ENCODE measurements at regions of chr15 and their contacts with region 1.

Region 1: DNA sequence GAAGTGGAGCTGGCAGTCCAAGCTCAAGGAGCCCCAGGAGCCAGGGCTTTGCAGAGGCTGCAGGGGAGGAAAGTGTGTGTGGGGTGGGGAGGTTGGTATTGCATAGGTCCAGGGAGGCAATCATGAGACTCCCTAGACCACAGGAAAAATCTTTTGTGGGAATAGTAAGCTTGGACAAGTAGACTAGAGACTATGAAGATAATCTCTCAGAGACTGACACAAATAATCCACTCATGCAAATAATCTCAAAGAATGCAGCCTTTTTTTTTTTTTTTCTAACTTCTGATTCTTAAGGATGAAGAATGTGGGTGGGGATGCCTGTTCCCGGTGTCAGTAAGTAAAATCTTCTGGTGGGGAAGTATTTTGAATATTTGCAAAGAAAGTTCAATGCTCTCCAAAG is 113.7 kb downstream of the GREM1 start:
- DNase-seq: no peak

Region 2: DNA sequence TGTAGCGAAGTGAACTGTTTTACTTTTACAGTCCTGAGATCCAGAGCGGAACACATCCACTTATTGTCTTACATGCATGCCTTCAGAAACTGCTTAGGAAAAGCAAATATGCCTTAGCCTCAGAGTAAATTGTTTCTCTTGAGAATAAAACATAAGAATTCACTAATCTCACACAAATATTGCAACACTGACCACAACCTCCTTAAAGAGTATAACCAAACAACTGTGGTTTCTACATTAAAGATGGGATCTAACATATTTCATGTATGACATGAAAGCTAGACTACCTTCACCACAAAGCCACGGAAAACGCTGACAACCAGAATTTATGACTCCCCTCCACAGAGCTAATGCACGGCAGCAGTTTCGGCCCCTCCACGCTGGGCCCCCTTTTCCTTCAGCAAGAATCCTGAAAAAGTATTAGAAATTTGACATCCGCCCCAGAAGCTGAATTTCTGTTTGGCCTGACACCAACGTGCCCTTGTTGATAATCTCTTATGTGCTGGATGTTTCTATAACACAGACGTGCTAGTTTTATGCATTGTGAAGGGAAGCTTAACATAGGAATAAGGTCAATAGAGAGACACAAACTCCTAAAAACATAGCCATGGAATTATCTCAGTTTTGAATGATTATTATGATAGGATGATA is 29.1 kb before region 1 on chr15:
- intact Hi-C with region 1: loop called in 1 of 2 experiments (anchors 1 kb)
- DNase-seq: no peak

Region 3: DNA sequence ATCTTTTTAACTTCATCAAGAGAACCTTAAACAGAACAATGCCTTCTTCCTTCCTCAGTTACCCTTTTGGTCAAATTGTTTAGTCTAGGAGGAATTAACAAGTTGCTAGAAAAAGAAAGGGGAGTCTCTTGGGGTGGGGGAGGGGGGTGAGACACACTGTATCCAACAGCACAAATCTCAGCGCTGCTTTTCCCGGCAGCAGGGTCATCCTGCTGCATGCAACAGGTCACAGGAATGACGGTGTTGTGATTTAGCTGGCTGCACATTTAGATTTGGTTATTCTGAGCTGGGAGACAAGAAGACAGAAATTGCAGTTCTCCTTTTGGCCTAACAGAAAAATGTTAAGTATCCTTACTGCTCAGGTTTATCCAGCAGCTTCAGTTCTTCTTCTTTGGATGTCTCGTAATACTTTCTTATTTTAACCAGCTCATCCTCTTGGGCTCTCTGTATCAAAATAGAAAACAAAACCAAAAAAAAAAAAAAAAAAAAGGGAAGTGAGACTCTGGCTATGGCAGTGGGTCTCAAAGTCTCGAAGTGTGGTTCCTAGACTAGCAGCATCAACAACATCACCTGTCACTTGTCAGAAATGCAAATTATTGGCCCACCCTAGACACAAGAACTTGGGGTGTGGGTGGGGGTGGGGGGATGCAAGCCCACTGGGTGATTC is 76.8 kb after region 1 on chr15:
- intact Hi-C with region 1: no loop called
- DNase-seq: no peak